ENCODE measurements at regions of chrX and their contacts with region 1.

Region 1: GRCh38 chrX:85977218-85977617 is 70.1 kb downstream of the CHM start:
- DNase-seq: no peak
- H3K4me3 ChIP-seq: no peak overlapping the region
- H3K27ac ChIP-seq: no peak overlapping the region
- H3K4me1 ChIP-seq: no peaks in the 10 kb centered on the region
- H3K27me3 ChIP-seq: no peaks in the 10 kb centered on the region
- CTCF ChIP-seq: no peak
- POLR2A ChIP-seq: no peak

Region 2: GRCh38 chrX:85955510-85955909 is 21.7 kb before region 1 on chrX:
- intact Hi-C with region 1: no loop called
- DNase-seq: no peak
- H3K4me3 ChIP-seq: no peak overlapping the region
- H3K27ac ChIP-seq: no peak overlapping the region
- H3K4me1 ChIP-seq: no peaks in the 10 kb centered on the region
- H3K27me3 ChIP-seq: no peaks in the 10 kb centered on the region
- CTCF ChIP-seq: no peak
- POLR2A ChIP-seq: no peak

Region 3: DNA sequence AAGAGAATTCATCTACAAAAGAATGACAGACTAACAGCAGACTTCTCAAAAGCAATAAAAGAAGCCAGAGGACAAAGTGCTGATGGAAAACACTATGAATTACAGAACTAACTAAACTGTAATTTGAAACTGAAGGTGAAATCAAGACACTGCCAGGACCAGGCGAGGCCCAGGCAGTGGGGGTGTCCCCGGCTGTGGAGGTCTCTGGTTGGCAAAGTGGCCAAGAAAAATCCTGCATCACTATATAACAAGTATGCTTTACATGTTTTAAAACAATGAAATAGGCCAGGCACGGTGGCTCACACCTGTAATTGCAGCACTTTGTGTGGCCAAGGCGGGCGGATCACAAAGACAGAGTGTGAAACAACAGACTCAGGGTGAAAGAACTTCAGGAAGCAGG is 37.2 kb after region 1 on chrX:
- intact Hi-C with region 1: loop called (anchors 2 kb)
- DNase-seq: no peak
- H3K4me3 ChIP-seq: no peak overlapping the region
- H3K27ac ChIP-seq: no peak overlapping the region
- H3K4me1 ChIP-seq: no peaks in the 10 kb centered on the region
- H3K27me3 ChIP-seq: no peaks in the 10 kb centered on the region
- CTCF ChIP-seq: no peak
- POLR2A ChIP-seq: no peak

Measured in vagina (tissue), 2 donors.